Ovary (tissue), 10 donors: ENCODE measurements at regions of chr20 and their contacts with region 1.

Region 1: DNA sequence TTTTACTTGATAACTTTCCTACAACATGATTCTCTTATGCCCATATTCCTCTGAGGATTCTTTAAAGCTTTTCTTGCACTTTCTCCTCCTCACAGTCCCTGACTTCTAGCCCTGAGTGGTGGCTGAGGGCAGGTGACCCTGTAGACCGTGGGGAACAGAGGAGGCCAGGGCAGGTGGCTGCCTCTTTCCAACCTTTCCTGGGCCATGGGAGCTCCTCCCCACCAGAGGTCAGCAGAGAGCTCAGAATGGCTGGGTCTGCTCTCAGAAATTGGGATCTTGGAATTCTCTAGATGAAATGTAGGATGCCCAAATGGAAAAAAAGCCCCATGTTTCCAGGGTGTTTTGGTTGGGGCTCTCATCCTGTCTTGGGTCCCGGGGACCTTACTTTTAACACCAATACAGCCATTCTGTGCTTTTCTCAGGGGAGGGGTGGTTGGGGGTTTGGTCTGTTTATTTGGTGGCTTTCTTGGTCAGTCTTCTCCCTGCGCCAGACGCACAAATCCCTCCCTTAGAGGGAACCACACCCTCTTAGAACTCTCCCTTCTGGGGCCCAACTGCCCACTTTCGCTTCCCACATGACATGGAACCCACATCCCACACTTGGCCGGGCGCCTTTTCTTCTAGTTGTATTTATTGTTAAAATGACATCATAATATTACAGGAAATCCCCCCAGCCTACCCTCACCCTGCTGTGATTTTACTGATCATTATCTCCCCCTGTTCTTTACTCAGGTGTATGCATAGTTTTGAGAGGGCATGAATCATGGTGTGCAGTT is 17.9 kb downstream of the GNAS start:
- DNase-seq: peak; percentile 59 to 79 (median 76)
- H3K4me3 ChIP-seq: no peak overlapping the region
- H3K27ac ChIP-seq: no peak overlapping the region
- H3K4me1 ChIP-seq: peaks cover 3% of the 10 kb centered on the region
- H3K27me3 ChIP-seq: no peaks in the 10 kb centered on the region
- CTCF ChIP-seq: peak; percentile 58 to 71 (median 68)
- EP300 ChIP-seq: no peak
- POLR2A ChIP-seq: no peak

Region 2: DNA sequence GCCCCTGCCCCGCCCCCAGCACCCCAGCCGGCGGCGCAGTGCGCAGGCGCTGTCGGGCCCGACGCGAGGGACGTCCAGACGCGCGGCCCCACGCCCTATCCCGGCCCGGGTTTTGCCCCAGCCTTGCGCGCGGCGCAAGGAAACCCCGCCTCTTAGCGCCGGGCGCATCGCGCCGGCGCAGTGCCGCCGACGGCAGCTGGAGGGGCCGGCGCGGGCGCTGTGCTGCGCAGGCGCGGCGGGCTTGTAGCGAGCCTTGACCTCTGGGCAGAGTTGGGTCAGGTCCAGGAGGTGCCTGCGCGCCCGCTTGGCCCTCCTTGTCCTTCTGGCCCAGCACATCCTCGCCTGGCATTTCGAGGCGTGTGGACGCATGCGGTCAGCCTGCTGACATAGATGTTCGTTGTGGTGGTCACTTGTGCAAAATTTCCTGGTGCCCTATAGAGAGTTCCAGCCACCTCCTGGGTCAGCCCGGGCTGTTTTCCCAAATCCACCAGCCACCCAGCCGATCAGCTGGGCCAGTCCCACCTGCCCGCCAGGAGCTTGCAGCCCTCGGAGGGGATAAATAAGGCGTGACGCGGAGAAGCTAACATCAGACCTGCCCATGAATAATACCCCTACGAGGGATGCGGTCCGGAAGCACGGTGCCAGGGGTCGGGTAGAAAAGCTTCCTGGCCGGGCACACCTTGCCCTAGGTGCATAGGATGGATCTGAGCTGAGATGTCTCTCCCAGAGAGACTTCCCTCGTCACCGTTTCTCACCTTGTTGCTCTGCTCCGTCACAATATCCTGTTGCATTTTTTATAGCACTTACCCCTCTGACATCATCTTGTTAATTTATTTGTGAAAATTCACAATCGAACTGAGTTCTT is 172.6 kb after region 1 on chr20:
- intact Hi-C with region 1: loop called in 1 of 4 experiments (anchors 10 kb)
- DNase-seq: peak; percentile 90 to 96 (median 93)
- H3K4me3 ChIP-seq: peak overlapping the region; percentile 94
- H3K27ac ChIP-seq: peak overlapping the region in 1 of 2 donors; percentile 69
- H3K4me1 ChIP-seq: peaks cover 8% of the 10 kb centered on the region
- H3K27me3 ChIP-seq: no peaks in the 10 kb centered on the region
- CTCF ChIP-seq: peak in 1 of 3 donors; percentile 7
- EP300 ChIP-seq: no peak
- POLR2A ChIP-seq: no peak

Region 3: GRCh38 chr20:59269411-59270025 is 399.1 kb after region 1 on chr20:
- intact Hi-C with region 1: no loop called
- DNase-seq: no peak
- H3K4me3 ChIP-seq: no peak overlapping the region
- H3K27ac ChIP-seq: no peak overlapping the region
- H3K4me1 ChIP-seq: no peaks in the 10 kb centered on the region
- H3K27me3 ChIP-seq: no peaks in the 10 kb centered on the region
- CTCF ChIP-seq: no peak
- EP300 ChIP-seq: no peak
- POLR2A ChIP-seq: no peak

Region 4: GRCh38 chr20:59403261-59403961 is 533.0 kb after region 1 on chr20:
- intact Hi-C with region 1: loop called in 1 of 4 experiments (anchors 5 kb)
- DNase-seq: peak; percentile 19 to 71 (median 38)
- H3K4me3 ChIP-seq: no peak overlapping the region
- H3K27ac ChIP-seq: no peak overlapping the region
- H3K4me1 ChIP-seq: no peaks in the 10 kb centered on the region
- H3K27me3 ChIP-seq: no peaks in the 10 kb centered on the region
- CTCF ChIP-seq: peak; percentile 52 to 81 (median 62)
- EP300 ChIP-seq: no peak
- POLR2A ChIP-seq: no peak